ENCODE measurements at regions of chr18 and their contacts with region 1.

Region 1: GRCh38 chr18:62249478-62250097 is 62.5 kb downstream of the RELCH start:
- DNase-seq: peak; percentile 89
- H3K4me3 Mint-ChIP-seq: no peak overlapping the region
- H3K27ac Mint-ChIP-seq: no peak overlapping the region
- H3K4me1 Mint-ChIP-seq: no peaks in the 10 kb centered on the region
- H3K27me3 Mint-ChIP-seq: no peaks in the 10 kb centered on the region

Region 2: DNA sequence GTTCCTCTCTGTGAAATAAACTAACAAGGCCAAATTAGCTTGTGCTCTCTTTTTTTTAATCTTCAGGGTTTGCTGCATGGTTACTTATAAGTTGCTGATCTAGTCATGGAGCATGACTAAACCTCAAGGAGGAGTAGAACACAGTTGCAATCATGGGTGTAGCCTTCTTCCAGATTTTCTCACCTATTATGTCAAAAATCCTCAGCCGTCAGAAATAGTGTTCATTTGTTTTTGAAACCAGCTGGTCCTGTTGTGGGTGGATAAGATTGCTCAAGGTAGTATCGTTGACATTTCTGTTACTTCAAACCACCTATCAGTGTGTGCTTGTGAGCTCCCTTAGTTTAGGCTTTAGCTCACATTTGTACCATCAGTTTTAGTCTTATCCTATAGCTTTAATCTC is 51.3 kb before region 1 on chr18:
- CTCF ChIA-PET with region 1: interaction called, 11 read pairs
- intact Hi-C with region 1: no loop called
- DNase-seq: no peak
- H3K4me3 Mint-ChIP-seq: no peak overlapping the region
- H3K27ac Mint-ChIP-seq: no peak overlapping the region
- H3K4me1 Mint-ChIP-seq: peaks cover 51% of the 10 kb centered on the region
- H3K27me3 Mint-ChIP-seq: no peaks in the 10 kb centered on the region

Region 3: DNA sequence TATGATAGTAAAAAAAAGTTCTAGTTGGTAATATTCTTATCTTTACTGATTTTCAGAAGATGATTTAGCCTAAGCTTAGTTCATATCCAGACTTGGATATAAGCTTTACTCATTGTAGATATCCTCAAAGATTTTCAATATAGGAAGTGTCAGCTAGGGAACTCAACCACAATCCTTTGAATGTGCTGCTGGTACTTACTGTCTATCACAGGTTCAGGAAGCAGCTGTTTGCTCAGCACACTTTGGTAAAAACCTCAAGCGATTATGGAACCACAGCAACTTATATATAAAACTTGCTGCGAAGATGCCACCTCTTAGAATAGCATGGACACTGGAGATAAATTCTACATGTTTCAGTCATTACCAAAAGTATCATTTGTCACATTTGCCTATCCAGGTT is 15.4 kb after region 1 on chr18:
- CTCF ChIA-PET with region 1: interaction called, 14 read pairs
- intact Hi-C with region 1: no loop called
- DNase-seq: no peak
- H3K4me3 Mint-ChIP-seq: no peak overlapping the region
- H3K27ac Mint-ChIP-seq: no peak overlapping the region
- H3K4me1 Mint-ChIP-seq: no peaks in the 10 kb centered on the region
- H3K27me3 Mint-ChIP-seq: no peaks in the 10 kb centered on the region

Region 4: GRCh38 chr18:62281684-62282083 is 32.1 kb after region 1 on chr18:
- CTCF ChIA-PET with region 1: no interaction called
- intact Hi-C with region 1: loop called (anchors 1 kb)
- DNase-seq: no peak
- H3K4me3 Mint-ChIP-seq: no peak overlapping the region
- H3K27ac Mint-ChIP-seq: no peak overlapping the region
- H3K4me1 Mint-ChIP-seq: peaks cover 39% of the 10 kb centered on the region
- H3K27me3 Mint-ChIP-seq: no peaks in the 10 kb centered on the region

Region 5: DNA sequence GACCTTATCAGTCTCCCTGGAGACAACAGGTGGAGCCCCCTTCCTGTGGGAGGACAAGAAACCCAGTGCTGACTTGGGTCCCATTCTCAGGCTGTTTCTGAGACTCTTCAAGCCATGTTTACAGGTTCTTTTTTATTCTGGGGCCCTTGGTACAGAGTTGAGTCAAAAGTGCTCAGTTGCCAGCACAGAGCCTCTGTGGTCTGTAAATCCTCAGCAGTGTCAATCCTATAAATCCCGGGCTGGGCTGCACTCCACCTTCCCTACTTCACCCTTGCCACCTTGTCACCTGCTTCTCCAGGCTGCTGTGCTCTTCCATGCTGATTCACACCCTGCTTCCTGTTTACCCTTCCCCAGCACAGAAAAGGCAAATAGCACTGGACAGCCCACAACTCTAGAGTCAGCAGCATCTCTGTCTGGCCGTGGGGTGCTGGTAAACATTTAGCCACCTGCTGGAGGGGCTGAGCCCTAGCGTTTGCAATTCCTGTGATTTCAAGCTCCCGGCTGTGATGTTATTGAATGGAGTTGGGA is 150.3 kb after region 1 on chr18:
- CTCF ChIA-PET with region 1: no interaction called
- intact Hi-C with region 1: no loop called
- DNase-seq: no peak
- H3K4me3 Mint-ChIP-seq: no peak overlapping the region
- H3K27ac Mint-ChIP-seq: no peak overlapping the region
- H3K4me1 Mint-ChIP-seq: peaks cover 9% of the 10 kb centered on the region
- H3K27me3 Mint-ChIP-seq: no peaks in the 10 kb centered on the region

Measured in activated naive CD4-positive, alpha-beta T cell treated with anti-CD3 and anti-CD28 coated beads for 36 hours (primary cell).